Ovary (tissue), 10 donors: ENCODE measurements at regions of chr4 and their contacts with region 1.

Region 1: DNA sequence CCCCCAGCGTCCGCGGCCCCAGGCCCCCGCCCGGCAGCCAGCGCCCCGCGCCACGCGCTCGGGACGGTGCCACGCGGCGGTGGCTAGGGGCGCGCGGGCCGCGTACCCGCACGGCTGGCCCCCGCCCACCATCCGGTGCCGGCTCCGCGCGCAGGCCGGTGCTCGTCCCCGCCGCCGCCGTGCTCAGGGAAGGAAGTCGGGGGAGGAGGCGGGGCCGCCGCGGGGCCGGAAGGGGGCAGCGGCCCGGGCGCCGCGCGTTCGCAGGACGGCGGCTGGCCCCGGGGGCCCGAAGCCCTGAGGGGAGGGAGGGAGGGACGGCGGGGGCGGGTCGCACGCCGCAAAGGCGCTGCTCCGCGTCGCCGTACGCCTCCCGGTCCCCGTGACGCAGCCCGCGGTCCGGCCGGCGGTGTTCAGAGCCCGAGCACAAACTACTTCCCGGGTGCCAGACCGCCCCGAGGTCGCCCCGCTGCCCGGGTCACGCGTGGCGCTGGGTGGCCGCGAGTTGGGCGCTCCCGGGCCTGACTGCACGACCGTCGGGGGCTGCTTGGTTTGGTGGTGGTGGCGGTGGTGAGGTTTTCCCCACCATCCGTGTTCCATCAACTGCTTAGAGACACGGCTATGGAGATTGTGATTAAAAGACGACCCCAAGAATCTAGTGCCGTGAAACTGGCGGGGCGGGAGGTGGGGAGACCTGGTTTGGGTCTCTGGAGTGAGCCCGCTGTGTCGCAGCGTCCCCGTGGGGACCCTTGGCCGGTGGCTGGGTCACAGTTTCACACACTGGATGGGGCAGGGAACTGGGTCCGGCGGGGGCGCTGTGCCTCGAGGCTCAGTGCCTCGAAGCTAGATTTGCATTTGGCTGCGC is at the start of gene DCTD:
- DNase-seq: peak; percentile 76 to 87 (median 82)
- H3K4me3 ChIP-seq: peak within 1 kb of the TSS; percentile 84
- H3K27ac ChIP-seq: peak within 1 kb of the TSS; percentile 76 to 98
- H3K4me1 ChIP-seq: peaks cover 4% of the 10 kb centered on the region
- H3K27me3 ChIP-seq: no peaks in the 10 kb centered on the region
- CTCF ChIP-seq: peak in 1 of 3 donors; percentile 11
- EP300 ChIP-seq: no peak
- POLR2A ChIP-seq: peak; percentile 28
- total RNA-seq, gene DCTD: 34.1 to 99.3 (median 91.6) TPM

Region 2: GRCh38 chr4:183098723-183099536 is 181.5 kb after region 1 on chr4 and contains the start of gene WWC2:
- intact Hi-C with region 1: loop called in 1 of 4 experiments (anchors 10 kb)
- DNase-seq: peak; percentile 86 to 93 (median 87)
- H3K4me3 ChIP-seq: peak within 1 kb of the TSS; percentile 59
- H3K27ac ChIP-seq: peak within 1 kb of the TSS; percentile 62 to 93
- H3K4me1 ChIP-seq: peaks cover 4% of the 10 kb centered on the region
- H3K27me3 ChIP-seq: no peaks in the 10 kb centered on the region
- CTCF ChIP-seq: peak in 2 of 3 donors; percentile 43 to 44
- EP300 ChIP-seq: no peak
- POLR2A ChIP-seq: peak; percentile 78
- total RNA-seq, gene WWC2: 28.3 to 43.0 (median 32.7) TPM